ENCODE measurements at regions of chr12 and their contacts with region 1.

Region 1: DNA sequence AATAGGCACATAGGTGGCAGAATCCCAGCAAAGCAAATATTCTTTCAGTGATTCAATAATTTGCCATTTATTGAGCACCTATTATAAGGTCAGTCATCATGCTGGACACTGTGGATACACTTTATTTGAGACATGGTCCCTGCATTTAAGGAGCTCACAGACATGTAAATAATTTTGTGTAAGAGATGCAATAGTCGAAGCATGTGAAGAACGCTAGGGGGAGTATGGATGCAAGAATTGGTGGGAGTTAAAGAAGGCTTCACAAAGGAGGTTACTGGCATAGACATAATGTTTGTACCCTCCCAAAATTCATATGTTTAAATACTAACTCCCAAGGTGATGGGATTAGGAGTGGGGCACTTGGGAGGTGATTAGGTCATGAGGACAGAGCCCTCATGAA is 260.6 kb upstream of the GARIN6 start:
- DNase-seq: peak; percentile 76
- ATAC-seq: peak; percentile 79
- H3K4me3 ChIP-seq: no peak overlapping the region
- H3K27ac ChIP-seq: no peak overlapping the region
- H3K4me1 ChIP-seq: no peaks in the 10 kb centered on the region
- H3K27me3 ChIP-seq: no peaks in the 10 kb centered on the region; the same call in 1 of the 2 replicates
- CTCF ChIP-seq: peak; percentile 89

Region 2: DNA sequence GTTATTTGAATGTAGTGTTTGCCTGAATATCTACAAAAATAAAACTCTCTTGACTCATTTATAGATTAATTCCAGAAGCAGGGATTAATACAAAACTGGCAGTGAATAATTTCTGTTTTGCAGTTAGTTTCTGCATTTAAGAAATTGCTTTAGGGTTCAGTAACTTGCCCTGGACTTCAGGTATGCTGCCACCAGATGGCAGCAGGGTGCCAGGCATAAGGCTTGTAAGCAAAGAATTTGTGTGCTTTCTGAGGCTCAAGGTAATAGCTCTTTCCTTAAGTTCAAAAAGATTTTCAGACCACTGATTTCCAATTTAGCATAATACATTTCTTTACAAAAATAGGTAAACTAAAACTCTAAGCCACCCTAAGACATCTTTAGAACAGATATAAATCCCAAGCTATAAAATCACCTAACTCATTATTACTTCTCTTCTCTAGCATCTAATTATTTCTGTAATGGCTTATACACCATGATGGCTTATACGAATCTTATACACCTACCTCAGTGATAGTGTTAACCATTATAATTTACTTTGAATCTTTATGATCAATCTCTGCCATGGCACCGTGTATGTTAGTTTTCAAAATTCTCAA is 343.5 kb before region 1 on chr12:
- CTCF ChIA-PET with region 1: interaction called, 8 read pairs
- POLR2A ChIA-PET with region 1: no interaction called
- intact Hi-C with region 1: loop called (anchors 1 kb)
- DNase-seq: peak; percentile 78
- ATAC-seq: peak; percentile 50; the same call in 1 of the 2 replicates
- H3K4me3 ChIP-seq: no peak overlapping the region
- H3K27ac ChIP-seq: no peak overlapping the region
- H3K4me1 ChIP-seq: no peaks in the 10 kb centered on the region
- H3K27me3 ChIP-seq: peaks cover 9% of the 10 kb centered on the region; the same call in 1 of the 2 replicates
- CTCF ChIP-seq: peak; percentile 92

Region 3: GRCh38 chr12:99352269-99352668 is 34.6 kb before region 1 on chr12:
- CTCF ChIA-PET with region 1: no interaction called
- POLR2A ChIA-PET with region 1: no interaction called
- intact Hi-C with region 1: no loop called
- DNase-seq: no peak
- ATAC-seq: no peak
- H3K4me3 ChIP-seq: no peak overlapping the region
- H3K27ac ChIP-seq: no peak overlapping the region
- H3K4me1 ChIP-seq: no peaks in the 10 kb centered on the region
- H3K27me3 ChIP-seq: peaks cover 4% of the 10 kb centered on the region; the same call in 1 of the 2 replicates
- CTCF ChIP-seq: no peak

Region 4: DNA sequence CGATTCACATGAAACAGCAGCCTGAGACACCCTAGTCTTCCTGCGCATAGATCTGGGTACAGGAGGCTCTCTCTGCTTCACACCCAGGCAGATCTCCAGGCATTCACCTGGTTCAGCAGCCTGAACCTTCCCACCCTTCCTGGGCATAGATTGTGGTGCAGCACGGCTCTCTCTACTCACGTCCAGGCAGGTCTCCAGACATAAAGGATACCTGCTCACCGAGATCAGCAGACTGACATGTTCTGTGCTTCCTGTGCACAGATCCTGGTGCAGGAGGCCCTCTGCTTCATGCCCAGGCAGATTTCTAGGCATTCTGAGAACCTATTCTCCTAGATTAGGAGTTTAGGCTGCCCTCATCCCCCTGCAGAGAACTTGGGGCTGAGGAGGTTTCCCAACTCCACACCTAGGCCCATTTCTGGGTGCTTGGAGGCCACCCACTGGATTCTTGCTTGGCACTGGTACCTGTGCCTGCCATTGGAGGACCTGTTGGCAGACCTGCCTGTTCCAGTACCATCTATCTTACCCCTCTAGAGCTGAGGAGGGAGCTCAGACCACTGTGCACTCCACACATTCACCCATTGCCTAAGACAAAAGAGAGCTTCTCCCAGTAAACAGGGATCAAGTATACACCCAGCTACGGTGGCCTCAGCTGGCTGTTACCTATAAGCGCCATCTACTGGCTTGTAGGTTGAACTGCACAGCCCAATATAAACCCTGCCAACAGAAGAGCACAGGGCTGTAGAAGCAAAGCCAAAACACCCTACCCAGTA is 232.7 kb after region 1 on chr12:
- CTCF ChIA-PET with region 1: interaction called, 7 read pairs
- POLR2A ChIA-PET with region 1: no interaction called
- intact Hi-C with region 1: loop called (anchors 1 kb)
- DNase-seq: peak; percentile 72
- ATAC-seq: peak; percentile 90
- H3K4me3 ChIP-seq: no peak overlapping the region
- H3K27ac ChIP-seq: no peak overlapping the region
- H3K4me1 ChIP-seq: no peaks in the 10 kb centered on the region
- H3K27me3 ChIP-seq: 0 out of 2 replicates have a peak, but pooled peaks cover 4% of the 10 kb centered on the region
- CTCF ChIP-seq: peak; percentile 90

Region 5: DNA sequence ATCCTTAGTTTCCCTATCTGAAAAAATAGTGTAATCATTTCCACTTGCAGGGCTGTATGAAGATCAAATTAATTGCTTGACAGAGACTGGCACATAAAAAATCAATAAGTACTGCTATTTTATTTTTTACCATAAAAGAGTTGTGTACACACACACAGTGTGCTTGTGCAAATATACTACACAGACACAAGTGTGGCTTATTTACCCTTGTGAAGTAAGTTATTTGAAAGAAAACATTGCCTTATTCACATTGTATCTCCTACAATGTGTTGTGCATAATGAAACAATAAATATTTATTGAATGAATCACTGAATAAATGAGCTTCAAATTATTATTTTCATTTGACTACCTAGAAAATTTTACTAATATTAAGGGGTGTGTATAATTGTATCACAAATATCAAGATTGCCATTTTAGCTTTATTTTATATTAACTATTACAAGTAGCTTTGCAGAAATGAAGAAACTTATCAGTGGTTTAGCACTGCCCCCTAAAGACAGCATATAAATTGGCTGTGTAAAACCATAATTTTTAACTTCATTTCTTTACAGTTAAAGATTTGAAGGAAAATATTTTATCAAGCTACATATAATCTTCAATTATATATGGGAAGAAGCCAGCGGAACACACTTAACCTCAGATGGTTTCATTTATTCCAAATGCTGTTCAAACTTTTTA is 271.9 kb after region 1 on chr12:
- CTCF ChIA-PET with region 1: interaction called, 11 read pairs
- POLR2A ChIA-PET with region 1: no interaction called
- intact Hi-C with region 1: loop called (anchors 1 kb)
- DNase-seq: peak; percentile 33
- ATAC-seq: peak; percentile 56
- H3K4me3 ChIP-seq: no peak overlapping the region
- H3K27ac ChIP-seq: no peak overlapping the region
- H3K4me1 ChIP-seq: no peaks in the 10 kb centered on the region
- H3K27me3 ChIP-seq: 0 out of 2 replicates have a peak, but pooled peaks cover 3% of the 10 kb centered on the region
- CTCF ChIP-seq: peak; percentile 70

Region 6: DNA sequence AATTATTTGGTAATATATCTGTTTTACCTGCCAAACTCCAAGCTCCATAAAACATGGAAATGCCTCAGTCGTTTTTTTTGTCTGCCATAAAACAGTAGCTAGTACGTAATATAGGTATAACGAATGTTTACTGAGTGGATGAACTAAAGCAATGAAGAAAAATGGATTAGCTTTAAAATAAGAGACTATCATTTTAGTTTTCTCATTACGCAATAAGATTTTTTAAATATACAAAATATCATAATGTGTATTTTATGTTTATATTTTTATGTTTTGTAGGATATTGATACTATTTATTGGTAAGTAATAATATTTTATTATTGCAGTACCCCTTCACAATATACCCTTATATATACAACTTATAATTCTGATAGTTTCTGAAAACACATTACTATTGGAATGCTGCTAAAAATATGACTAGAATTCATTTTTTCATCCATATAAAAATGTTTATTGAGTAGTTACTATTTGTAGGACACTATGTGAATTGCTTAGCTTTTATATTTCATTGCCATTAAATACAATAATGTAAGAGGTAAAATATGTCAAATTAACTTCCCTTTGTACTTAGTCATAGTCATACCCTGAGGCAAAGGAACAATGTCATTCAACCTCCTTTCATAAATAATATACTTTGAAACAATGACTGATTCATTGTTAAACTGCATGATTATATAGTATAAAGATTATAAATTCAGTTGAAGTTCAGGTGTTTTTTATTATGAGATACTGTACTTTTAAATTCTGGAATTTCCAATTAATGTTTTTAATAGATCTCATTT is 365.6 kb after region 1 on chr12:
- CTCF ChIA-PET with region 1: no interaction called
- POLR2A ChIA-PET with region 1: no interaction called
- intact Hi-C with region 1: loop called (anchors 5 kb)
- DNase-seq: peak; percentile 79
- ATAC-seq: peak; percentile 83
- H3K4me3 ChIP-seq: no peak overlapping the region
- H3K27ac ChIP-seq: peak overlapping the region; percentile 43
- H3K4me1 ChIP-seq: peaks cover 12% of the 10 kb centered on the region
- H3K27me3 ChIP-seq: no peaks in the 10 kb centered on the region
- CTCF ChIP-seq: no peak

Region 7: DNA sequence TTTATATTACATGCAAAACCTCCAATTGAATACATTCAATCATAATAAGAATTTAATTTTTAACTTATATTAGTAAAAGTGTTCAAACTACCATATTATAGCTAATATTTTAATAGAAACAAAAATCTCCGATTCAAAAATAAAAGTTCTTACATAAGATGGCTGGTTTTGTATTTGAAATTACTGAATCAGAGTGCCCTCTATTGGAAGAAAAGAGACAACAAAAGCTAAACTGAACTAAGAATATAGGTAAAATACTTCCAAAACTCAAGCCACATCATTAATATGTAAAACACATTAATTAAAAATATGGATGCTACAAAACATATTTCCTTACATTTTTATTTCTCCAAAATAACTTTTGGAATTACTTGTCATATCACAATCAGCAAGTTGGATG is 380.9 kb after region 1 on chr12:
- CTCF ChIA-PET with region 1: interaction called, 4 read pairs
- POLR2A ChIA-PET with region 1: no interaction called
- intact Hi-C with region 1: loop called (anchors 1 kb)
- DNase-seq: peak; percentile 53
- ATAC-seq: no peak
- H3K4me3 ChIP-seq: no peak overlapping the region
- H3K27ac ChIP-seq: no peak overlapping the region
- H3K4me1 ChIP-seq: peaks cover 16% of the 10 kb centered on the region
- H3K27me3 ChIP-seq: no peaks in the 10 kb centered on the region
- CTCF ChIP-seq: peak; percentile 72

Measured in PC-3 (cell line).